GM12878 (cell line): ENCODE measurements at regions of chr2 and their contacts with region 1.

Region 1: GRCh38 chr2:159895258-159896065 is 97.5 kb upstream of the CD302 start:
- DNase-seq: no peak
- ATAC-seq: peak; percentile 62
- H3K4me3 ChIP-seq: peak overlapping the region; percentile 32
- H3K27ac ChIP-seq: peak overlapping the region; percentile 83
- H3K4me1 ChIP-seq: peaks cover 89% of the 10 kb centered on the region
- H3K27me3 ChIP-seq: no peaks in the 10 kb centered on the region
- CTCF ChIP-seq: no peak
- EP300 ChIP-seq: peak; percentile 84 to 92; a peak in 3 of 4 replicates
- POLR2A ChIP-seq: peak; percentile 21; the same call in 1 of the 2 replicates
- RAD21 ChIP-seq: no peak

Region 2: DNA sequence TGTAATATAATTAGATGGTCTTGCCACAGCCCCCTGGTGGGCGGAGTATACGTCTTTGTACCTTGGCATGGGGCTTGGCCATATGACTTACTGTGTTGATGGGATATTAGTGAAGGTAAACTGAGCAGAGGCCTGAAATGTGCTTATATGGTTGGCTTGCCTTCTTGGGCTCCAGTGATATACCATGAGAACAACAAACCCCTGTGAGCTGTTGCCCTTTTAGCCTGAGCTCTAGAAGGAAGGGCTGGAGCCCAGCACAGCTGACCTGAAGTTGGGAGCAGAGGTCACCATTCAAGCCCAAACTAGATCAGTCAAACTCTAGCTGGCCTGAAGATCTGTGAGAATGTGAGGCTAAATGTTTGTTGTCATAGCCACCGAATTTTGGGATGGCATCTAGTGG is 22.2 kb before region 1 on chr2:
- CTCF ChIA-PET with region 1: interaction called, 4 read pairs
- POLR2A ChIA-PET with region 1: interaction called, 7 read pairs
- RAD21 ChIA-PET with region 1: interaction called, 14 read pairs
- SMC1A ChIA-PET with region 1: interaction called, 20 read pairs
- in situ Hi-C with region 1: no loop called
- intact Hi-C with region 1: no loop called
- DNase-seq: no peak
- ATAC-seq: peak; percentile 30
- H3K4me3 ChIP-seq: no peak overlapping the region
- H3K27ac ChIP-seq: no peak overlapping the region
- H3K4me1 ChIP-seq: no peaks in the 10 kb centered on the region
- H3K27me3 ChIP-seq: no peaks in the 10 kb centered on the region
- CTCF ChIP-seq: no peak
- EP300 ChIP-seq: no peak
- POLR2A ChIP-seq: no peak
- RAD21 ChIP-seq: no peak

Region 3: DNA sequence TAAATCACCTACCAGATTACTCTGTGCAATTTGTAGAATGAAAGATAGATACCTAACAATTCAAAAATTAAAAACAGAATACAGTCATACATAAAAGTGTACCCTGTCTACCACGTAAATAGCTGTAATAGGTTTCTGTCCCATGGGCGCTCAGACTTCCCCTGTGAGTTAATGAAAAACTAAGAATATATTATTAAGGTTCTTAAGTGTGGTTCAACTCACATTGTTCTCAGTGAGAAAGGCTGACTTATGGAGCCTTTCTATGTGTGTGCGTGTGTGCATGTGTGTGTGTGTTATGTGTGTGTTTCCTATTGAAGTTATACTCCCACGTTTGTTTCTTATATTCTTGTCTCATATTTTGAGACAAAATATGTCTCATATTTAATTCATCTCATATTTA is 17.1 kb after region 1 on chr2:
- CTCF ChIA-PET with region 1: interaction called, 89 read pairs
- POLR2A ChIA-PET with region 1: interaction called, 840 read pairs
- RAD21 ChIA-PET with region 1: interaction called, 137 read pairs
- SMC1A ChIA-PET with region 1: interaction called, 1,536 read pairs
- in situ Hi-C with region 1: no loop called
- intact Hi-C with region 1: no loop called
- DNase-seq: no peak
- ATAC-seq: peak; percentile 81
- H3K4me3 ChIP-seq: no peak overlapping the region
- H3K27ac ChIP-seq: no peak overlapping the region
- H3K4me1 ChIP-seq: no peaks in the 10 kb centered on the region
- H3K27me3 ChIP-seq: no peaks in the 10 kb centered on the region
- CTCF ChIP-seq: no peak
- EP300 ChIP-seq: no peak; a peak in 1 of 4 replicates
- POLR2A ChIP-seq: no peak
- RAD21 ChIP-seq: no peak

Region 4: DNA sequence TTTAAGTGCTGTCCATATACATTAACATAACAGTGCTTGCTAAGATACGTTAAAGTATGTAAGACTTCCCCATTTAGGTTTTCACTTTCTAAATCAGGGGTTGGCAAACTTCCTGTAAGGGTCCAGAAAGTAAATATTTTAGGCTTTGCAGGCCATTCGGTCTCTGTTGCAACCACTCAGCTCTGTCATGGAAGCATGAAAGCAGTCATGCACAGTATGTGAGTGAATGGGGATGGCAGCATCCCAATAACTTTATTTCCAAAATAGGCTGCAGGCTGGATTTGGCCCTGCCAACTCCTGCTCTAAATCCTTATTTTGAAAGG is 38.2 kb after region 1 on chr2:
- CTCF ChIA-PET with region 1: interaction called, 335 read pairs
- POLR2A ChIA-PET with region 1: interaction called, 840 read pairs
- RAD21 ChIA-PET with region 1: interaction called, 39 read pairs
- SMC1A ChIA-PET with region 1: interaction called, 1,536 read pairs
- in situ Hi-C with region 1: no loop called
- intact Hi-C with region 1: loop called (anchors 5 kb)
- DNase-seq: peak; percentile 70
- ATAC-seq: peak; percentile 92
- H3K4me3 ChIP-seq: peak overlapping the region; percentile 45
- H3K27ac ChIP-seq: peak overlapping the region; percentile 85
- H3K4me1 ChIP-seq: peaks cover 25% of the 10 kb centered on the region
- H3K27me3 ChIP-seq: no peaks in the 10 kb centered on the region
- CTCF ChIP-seq: no peak
- EP300 ChIP-seq: no peak
- POLR2A ChIP-seq: no peak
- RAD21 ChIP-seq: no peak

Region 5: GRCh38 chr2:159968279-159968900 is 72.9 kb after region 1 on chr2:
- CTCF ChIA-PET with region 1: interaction called, 4 read pairs
- POLR2A ChIA-PET with region 1: interaction called, 3 read pairs
- RAD21 ChIA-PET with region 1: no interaction called
- SMC1A ChIA-PET with region 1: interaction called, 11 read pairs
- in situ Hi-C with region 1: no loop called
- intact Hi-C with region 1: loop called (anchors 5 kb)
- DNase-seq: no peak
- ATAC-seq: peak; percentile 66
- H3K4me3 ChIP-seq: no peak overlapping the region
- H3K27ac ChIP-seq: no peak overlapping the region
- H3K4me1 ChIP-seq: peaks cover 4% of the 10 kb centered on the region; the same call in 1 of the 2 replicates
- H3K27me3 ChIP-seq: no peaks in the 10 kb centered on the region
- CTCF ChIP-seq: peak; percentile 59 to 92 (median 67); a peak in 5 of 6 replicates
- EP300 ChIP-seq: no peak
- POLR2A ChIP-seq: no peak
- RAD21 ChIP-seq: peak; percentile 92

Region 6: GRCh38 chr2:160210599-160211138 is 315.2 kb after region 1 on chr2:
- CTCF ChIA-PET with region 1: no interaction called
- POLR2A ChIA-PET with region 1: no interaction called
- RAD21 ChIA-PET with region 1: interaction called, 4 read pairs
- SMC1A ChIA-PET with region 1: no interaction called
- in situ Hi-C with region 1: no loop called
- intact Hi-C with region 1: loop called (anchors 10 kb)
- DNase-seq: peak; percentile 75
- ATAC-seq: peak; percentile 90
- H3K4me3 ChIP-seq: no peak overlapping the region
- H3K27ac ChIP-seq: no peak overlapping the region
- H3K4me1 ChIP-seq: peaks cover 31% of the 10 kb centered on the region
- H3K27me3 ChIP-seq: peaks cover 0 to 2% of the 10 kb centered on the region in 2 experiments; a peak in 3 of 4 replicates
- CTCF ChIP-seq: peak; percentile 89 to 96 (median 95)
- EP300 ChIP-seq: peak in 1 of 2 experiments; percentile 86; a peak in 2 of 4 replicates
- POLR2A ChIP-seq: no peak
- RAD21 ChIP-seq: peak; percentile 86